ENCODE measurements at regions of chr19 and their contacts with region 1.

Region 1: GRCh38 chr19:27733551-27734266 is 1479.2 kb downstream of the UQCRFS1 start:
- DNase-seq: no peak
- ATAC-seq: peak; percentile 44

Region 2: GRCh38 chr19:27676877-27677276 is 56.8 kb before region 1 on chr19:
- intact Hi-C with region 1: loop called (anchors 5 kb)
- DNase-seq: no peak
- ATAC-seq: peak; percentile 88

Region 3: GRCh38 chr19:27694361-27695055 is 39.2 kb before region 1 on chr19:
- intact Hi-C with region 1: no loop called
- DNase-seq: no peak
- ATAC-seq: no peak